ENCODE measurements at regions of chr17 and their contacts with region 1.

Region 1: DNA sequence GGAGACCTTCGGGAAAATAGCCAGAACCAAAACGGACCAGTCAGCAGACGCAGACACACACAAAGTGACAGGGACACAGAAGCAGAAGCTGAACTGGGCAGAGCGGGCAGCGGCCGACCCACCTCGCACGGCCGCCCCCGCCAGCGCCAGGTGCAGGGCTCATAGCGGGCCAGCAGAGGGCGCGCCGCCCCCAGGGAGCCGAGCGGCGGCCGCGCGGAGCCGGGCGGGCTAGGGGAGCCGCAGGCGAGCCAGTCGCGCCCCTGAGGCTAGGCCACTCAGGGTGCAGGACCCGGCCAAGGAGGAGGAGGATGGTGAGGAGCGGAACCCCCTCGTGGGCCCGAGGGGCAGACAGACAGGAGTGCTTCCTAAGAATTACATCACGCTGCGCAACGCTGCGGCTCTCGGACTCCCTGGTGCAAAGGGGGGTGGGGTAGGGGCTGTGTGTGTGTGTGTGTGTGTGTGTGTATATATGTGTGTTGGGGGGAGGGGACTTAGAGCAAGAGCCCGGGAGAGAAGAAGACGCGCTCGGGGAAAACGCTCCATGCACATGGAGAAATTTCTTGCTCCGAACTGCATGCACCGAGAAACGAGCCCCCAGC is 913 bp upstream of the NOG start:
- DNase-seq: peak in 32 of 35 experiments; percentile 23 to 82 (median 58)
- ATAC-seq: peak; percentile 53 to 66 (median 62)
- H3K4me3 ChIP-seq: peak overlapping the region; percentile 52 to 80
- H3K4me3 Mint-ChIP-seq: peak overlapping the region; percentile 78 to 94 (median 79)
- H3K27ac ChIP-seq: no peak overlapping the region
- H3K27ac Mint-ChIP-seq: peak overlapping the region; percentile 44 to 69
- H3K4me1 ChIP-seq: peaks cover 2 to 37% of the 10 kb centered on the region in 2 experiments
- H3K4me1 Mint-ChIP-seq: peaks cover 23 to 26% (median 24%) of the 10 kb centered on the region in 3 donors
- H3K27me3 ChIP-seq: peaks cover 0 to 55% of the 10 kb centered on the region in 2 experiments
- H3K27me3 Mint-ChIP-seq: peaks cover 17 to 44% of the 10 kb centered on the region in 2 donors

Region 2: DNA sequence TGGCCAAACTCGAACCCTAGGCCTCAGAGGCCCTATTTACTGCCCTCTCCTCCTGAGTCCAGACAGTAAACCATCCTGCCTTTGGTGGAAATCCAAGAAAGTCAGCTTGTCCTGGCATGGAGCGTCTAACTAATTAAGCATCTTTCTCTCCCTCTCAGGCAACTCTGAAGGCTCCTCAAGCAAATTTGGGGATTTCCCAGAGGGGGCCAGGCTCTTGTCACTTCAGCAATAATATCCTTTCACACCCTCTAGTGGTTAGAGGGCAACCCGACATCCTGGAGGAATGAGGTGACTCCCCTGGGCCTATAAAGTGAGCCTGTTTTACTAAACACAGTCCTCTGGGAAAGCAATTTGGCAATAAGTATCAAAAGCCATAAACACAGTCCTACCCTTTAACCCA is 61.3 kb after region 1 on chr17:
- CTCF ChIA-PET with region 1: interaction called, 6 to 18 read pairs
- POLR2A ChIA-PET with region 1: interaction called in 1 of 2 experiments, 5 read pairs
- DNase-seq: peak; percentile 21 to 84 (median 62)
- ATAC-seq: peak; percentile 96 to 100 (median 98)
- H3K4me3 ChIP-seq: no peak overlapping the region
- H3K4me3 Mint-ChIP-seq: no peak overlapping the region
- H3K27ac ChIP-seq: no peak overlapping the region
- H3K27ac Mint-ChIP-seq: peak overlapping the region; percentile 28 to 45
- H3K4me1 ChIP-seq: peaks cover 4% of the 10 kb centered on the region in 2 experiments
- H3K4me1 Mint-ChIP-seq: peaks cover 6 to 10% (median 9%) of the 10 kb centered on the region in 3 donors
- H3K27me3 ChIP-seq: no peaks in the 10 kb centered on the region
- H3K27me3 Mint-ChIP-seq: peaks cover 0 to 2% of the 10 kb centered on the region in 2 donors

Region 3: DNA sequence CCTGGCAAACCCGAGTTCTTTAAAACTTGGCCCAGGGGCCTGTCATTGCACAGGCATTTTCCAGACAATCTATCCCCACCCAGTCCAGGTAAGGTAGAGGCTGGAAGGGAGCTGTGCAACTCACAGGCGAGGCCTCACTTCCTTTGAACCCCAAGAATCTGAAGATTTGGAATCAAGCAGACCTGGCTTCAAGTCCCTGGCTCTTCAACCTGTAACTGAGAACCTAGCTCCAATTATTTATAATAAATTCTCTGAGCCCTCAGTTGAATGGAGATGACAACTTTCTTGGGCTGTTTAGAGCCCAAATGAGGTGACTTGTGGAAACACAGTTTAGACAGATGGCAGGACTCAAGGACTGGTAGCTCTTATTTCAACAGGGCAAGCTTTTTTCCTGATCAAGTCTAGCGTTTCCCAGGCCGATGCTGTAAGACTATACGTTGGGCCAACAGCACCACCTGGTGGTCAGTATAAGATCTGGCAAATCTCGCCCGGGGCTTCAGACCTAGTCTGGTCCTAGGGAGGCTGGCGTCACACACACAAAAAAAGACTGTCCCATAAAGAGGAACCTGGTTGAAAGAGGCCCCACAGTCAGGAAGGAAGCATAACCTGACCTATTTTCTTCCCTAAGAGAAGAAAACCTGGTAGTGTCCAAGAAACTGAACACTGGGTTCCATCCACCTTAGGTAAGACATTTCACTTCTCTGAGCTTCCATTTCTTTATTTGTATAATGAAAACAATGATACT is 123.2 kb after region 1 on chr17:
- CTCF ChIA-PET with region 1: interaction called, 15 to 17 read pairs
- POLR2A ChIA-PET with region 1: no interaction called
- DNase-seq: peak; percentile 29 to 86 (median 65)
- ATAC-seq: peak; percentile 88 to 93 (median 90)
- H3K4me3 ChIP-seq: no peak overlapping the region
- H3K4me3 Mint-ChIP-seq: no peak overlapping the region
- H3K27ac ChIP-seq: no peak overlapping the region
- H3K27ac Mint-ChIP-seq: no peak overlapping the region
- H3K4me1 ChIP-seq: peaks cover 0 to 5% of the 10 kb centered on the region in 2 experiments
- H3K4me1 Mint-ChIP-seq: peaks cover 2 to 7% (median 5%) of the 10 kb centered on the region in 3 donors
- H3K27me3 ChIP-seq: peaks cover 0 to 8% of the 10 kb centered on the region in 2 experiments
- H3K27me3 Mint-ChIP-seq: peaks cover 0 to 2% of the 10 kb centered on the region in 2 donors

Region 4: GRCh38 chr17:56761387-56761786 is 168.8 kb after region 1 on chr17:
- CTCF ChIA-PET with region 1: no interaction called
- POLR2A ChIA-PET with region 1: no interaction called
- DNase-seq: no peak
- ATAC-seq: no peak
- H3K4me3 ChIP-seq: no peak overlapping the region
- H3K4me3 Mint-ChIP-seq: no peak overlapping the region
- H3K27ac ChIP-seq: no peak overlapping the region
- H3K27ac Mint-ChIP-seq: no peak overlapping the region
- H3K4me1 ChIP-seq: peaks cover 10 to 20% of the 10 kb centered on the region in 2 experiments
- H3K4me1 Mint-ChIP-seq: peaks cover 18 to 26% (median 25%) of the 10 kb centered on the region in 3 donors
- H3K27me3 ChIP-seq: peaks cover 0 to 5% of the 10 kb centered on the region in 2 experiments
- H3K27me3 Mint-ChIP-seq: peaks cover 0 to 11% of the 10 kb centered on the region in 2 donors

Region 5: GRCh38 chr17:56779898-56780733 is 187.5 kb after region 1 on chr17:
- CTCF ChIA-PET with region 1: interaction called, 4 to 11 read pairs
- POLR2A ChIA-PET with region 1: interaction called in 1 of 2 experiments, 3 read pairs
- DNase-seq: peak; percentile 68 to 90 (median 83)
- ATAC-seq: peak; percentile 93 to 98 (median 96)
- H3K4me3 ChIP-seq: peak overlapping the region; percentile 57 to 76
- H3K4me3 Mint-ChIP-seq: peak overlapping the region; percentile 87 to 94 (median 89)
- H3K27ac ChIP-seq: peak overlapping the region; percentile 75
- H3K27ac Mint-ChIP-seq: peak overlapping the region; percentile 95 to 96
- H3K4me1 ChIP-seq: peaks cover 15 to 16% of the 10 kb centered on the region in 2 experiments
- H3K4me1 Mint-ChIP-seq: peaks cover 21 to 26% (median 24%) of the 10 kb centered on the region in 3 donors
- H3K27me3 ChIP-seq: peaks cover 0 to 15% of the 10 kb centered on the region in 2 experiments
- H3K27me3 Mint-ChIP-seq: no peaks in the 10 kb centered on the region